SK-N-SH (cell line): ENCODE measurements at regions of chr16 and their contacts with region 1.

Region 1: DNA sequence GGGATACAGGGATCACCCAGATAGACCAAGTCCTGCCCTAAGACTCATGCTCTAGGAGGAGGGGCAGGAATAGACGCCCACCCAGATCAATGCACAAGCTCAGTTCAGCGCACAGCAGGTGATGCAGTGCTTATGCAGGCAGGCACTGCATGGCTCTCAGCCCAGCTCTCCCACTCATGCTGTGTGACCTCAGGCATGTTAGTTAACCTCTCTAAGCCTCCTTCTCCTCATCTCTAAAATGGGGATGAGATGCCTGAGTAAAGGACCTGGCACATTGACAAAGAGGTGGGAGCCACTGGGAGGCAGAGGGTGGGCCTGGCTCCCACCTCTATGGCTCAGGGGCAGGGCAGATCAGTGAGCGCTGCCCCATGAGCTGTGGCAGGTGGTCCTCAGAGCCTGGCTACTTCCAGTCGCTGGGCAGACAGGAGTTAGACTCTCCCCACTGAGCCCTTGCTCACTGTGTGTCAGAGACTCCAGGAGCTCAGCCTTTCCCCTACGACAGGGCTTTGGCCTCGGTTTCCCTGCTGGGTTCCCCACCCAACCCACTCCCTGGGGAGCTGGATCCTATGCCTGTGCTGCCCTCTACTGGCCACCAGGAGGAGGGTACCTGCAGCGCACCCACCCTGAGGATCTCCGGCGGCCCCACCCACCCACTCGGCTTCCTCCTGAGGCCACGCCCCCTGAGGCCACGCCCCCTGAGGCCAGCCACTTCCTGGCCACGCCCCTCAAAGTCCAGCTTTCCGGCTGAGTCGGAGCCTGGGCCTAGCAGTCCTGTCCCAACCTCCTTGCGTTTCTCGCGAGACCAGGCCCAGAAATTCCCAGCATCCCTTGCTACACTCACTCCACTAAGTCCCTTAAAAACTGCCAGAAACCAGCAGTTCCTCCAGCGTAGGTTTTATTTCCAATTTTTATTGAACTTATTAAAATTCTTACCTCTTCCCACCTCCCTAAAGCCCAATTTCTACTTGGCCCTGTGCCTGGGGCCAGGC is 196.1 kb downstream of the GSG1L start:
- DNase-seq: peak; percentile 92
- H3K4me3 ChIP-seq: no peak overlapping the region
- H3K27ac ChIP-seq: no peak overlapping the region
- H3K4me1 ChIP-seq: no peaks in the 10 kb centered on the region
- H3K27me3 ChIP-seq: no peaks in the 10 kb centered on the region
- CTCF ChIP-seq: peak; percentile 56
- EP300 ChIP-seq: no peak
- RAD21 ChIP-seq: peak; percentile 70

Region 2: GRCh38 chr16:27822995-27823394 is 44.4 kb before region 1 on chr16:
- CTCF ChIA-PET with region 1: no interaction called
- POLR2A ChIA-PET with region 1: no interaction called
- DNase-seq: no peak
- H3K4me3 ChIP-seq: no peak overlapping the region
- H3K27ac ChIP-seq: no peak overlapping the region
- H3K4me1 ChIP-seq: no peaks in the 10 kb centered on the region
- H3K27me3 ChIP-seq: peaks cover 15% of the 10 kb centered on the region; the same call in 1 of the 2 replicates
- CTCF ChIP-seq: no peak
- EP300 ChIP-seq: no peak
- RAD21 ChIP-seq: no peak

Region 3: GRCh38 chr16:27853101-27853500 is 14.3 kb before region 1 on chr16:
- CTCF ChIA-PET with region 1: interaction called, 10 read pairs
- POLR2A ChIA-PET with region 1: no interaction called
- DNase-seq: no peak
- H3K4me3 ChIP-seq: no peak overlapping the region
- H3K27ac ChIP-seq: no peak overlapping the region
- H3K4me1 ChIP-seq: no peaks in the 10 kb centered on the region
- H3K27me3 ChIP-seq: peaks cover 12% of the 10 kb centered on the region; the same call in 1 of the 2 replicates
- CTCF ChIP-seq: no peak
- EP300 ChIP-seq: no peak
- RAD21 ChIP-seq: no peak

Region 4: GRCh38 chr16:27879601-27880247 is 12.3 kb after region 1 on chr16:
- CTCF ChIA-PET with region 1: interaction called, 12 read pairs
- POLR2A ChIA-PET with region 1: no interaction called
- DNase-seq: peak; percentile 75
- H3K4me3 ChIP-seq: no peak overlapping the region
- H3K27ac ChIP-seq: peak overlapping the region in 1 of 2 experiments; percentile 72; a peak in 2 of 4 replicates
- H3K4me1 ChIP-seq: peaks cover 0 to 14% of the 10 kb centered on the region in 2 experiments; a peak in 1 of 4 replicates
- H3K27me3 ChIP-seq: no peaks in the 10 kb centered on the region
- CTCF ChIP-seq: no peak
- EP300 ChIP-seq: peak in 1 of 2 experiments; percentile 27; a peak in 1 of 4 replicates
- RAD21 ChIP-seq: peak; percentile 43